HEK293 (cell line): ENCODE measurements at regions of chr2 and their contacts with region 1.

Region 1: GRCh38 chr2:27016801-27017325 is 15.9 kb upstream of the TMEM214 start:
- H3K4me3 ChIP-seq: no peak overlapping the region
- H3K27ac ChIP-seq: no peak overlapping the region
- H3K4me1 ChIP-seq: 0 out of 2 replicates have a peak, but pooled peaks cover 3% of the 10 kb centered on the region
- CTCF ChIP-seq: peak; percentile 29; the same call in 1 of the 2 replicates

Region 2: GRCh38 chr2:26942543-26943295 is 74.1 kb before region 1 on chr2:
- CTCF ChIA-PET with region 1: interaction called, 15 read pairs
- POLR2A ChIA-PET with region 1: no interaction called
- H3K4me3 ChIP-seq: no peak overlapping the region
- H3K27ac ChIP-seq: no peak overlapping the region
- H3K4me1 ChIP-seq: no peaks in the 10 kb centered on the region
- CTCF ChIP-seq: peak; percentile 62

Region 3: GRCh38 chr2:26959331-26959730 is 57.5 kb before region 1 on chr2:
- CTCF ChIA-PET with region 1: interaction called, 307 read pairs
- POLR2A ChIA-PET with region 1: interaction called, 12 read pairs
- H3K4me3 ChIP-seq: no peak overlapping the region
- H3K27ac ChIP-seq: no peak overlapping the region
- H3K4me1 ChIP-seq: peaks cover 5% of the 10 kb centered on the region; the same call in 1 of the 2 replicates
- CTCF ChIP-seq: no peak

Region 4: DNA sequence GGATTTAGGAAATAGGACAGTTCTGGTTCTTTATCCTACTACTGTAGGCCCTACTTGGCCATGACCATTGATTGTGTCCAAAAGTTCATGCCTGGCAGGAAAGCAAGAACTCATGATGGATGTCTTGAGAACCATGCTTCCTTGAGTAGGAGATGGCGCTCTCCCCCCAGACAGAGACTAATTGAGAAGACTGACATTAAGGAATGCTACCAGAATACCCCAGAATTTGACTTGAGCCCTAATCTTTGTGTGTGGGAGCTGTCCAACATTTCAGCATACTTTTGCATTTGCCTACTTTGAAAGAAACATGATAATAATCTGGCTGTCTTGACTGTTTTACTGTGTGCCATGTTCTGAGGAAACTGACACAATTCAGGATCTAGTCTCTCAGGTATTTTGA is 23.1 kb before region 1 on chr2:
- CTCF ChIA-PET with region 1: interaction called, 16 read pairs
- POLR2A ChIA-PET with region 1: no interaction called
- H3K4me3 ChIP-seq: no peak overlapping the region
- H3K27ac ChIP-seq: no peak overlapping the region
- H3K4me1 ChIP-seq: no peaks in the 10 kb centered on the region
- CTCF ChIP-seq: no peak